ENCODE measurements at regions of chr11 and their contacts with region 1.

Region 1: DNA sequence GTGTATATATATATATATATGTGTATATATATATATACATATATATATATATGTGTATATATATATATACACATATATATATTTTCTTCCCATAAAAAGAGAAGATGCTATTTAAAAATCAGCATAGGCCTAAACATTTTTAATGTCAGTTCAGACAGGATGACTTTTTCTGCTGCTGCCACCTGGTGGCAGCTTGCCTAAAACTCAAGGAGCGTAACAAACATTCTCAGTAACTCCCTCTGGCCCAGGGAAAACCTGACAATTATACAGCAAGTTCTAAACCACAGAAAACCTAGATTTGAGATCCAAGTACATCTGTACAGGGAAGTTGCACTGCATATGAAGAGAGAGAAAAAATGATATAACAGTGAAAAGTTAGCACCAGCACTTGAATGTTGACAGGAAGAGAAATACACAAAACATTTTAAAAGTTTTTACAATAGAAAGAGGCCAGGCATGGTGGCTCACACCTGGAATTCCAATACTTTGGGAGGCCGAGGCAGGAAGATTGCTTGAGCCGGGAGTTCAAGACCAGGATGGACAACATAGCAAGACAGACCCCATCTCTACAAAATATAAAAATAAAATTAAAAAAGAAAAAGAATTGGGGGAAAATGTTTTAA is 16.6 kb downstream of the OR8A1 start:
- DNase-seq: peak; percentile 30
- CTCF ChIP-seq: peak; percentile 80

Region 2: GRCh38 chr11:124070915-124071635 is 515.3 kb before region 1 on chr11:
- in situ Hi-C with region 1: loop called (anchors 25 kb)
- DNase-seq: peak; percentile 64
- CTCF ChIP-seq: peak; percentile 71

Region 3: DNA sequence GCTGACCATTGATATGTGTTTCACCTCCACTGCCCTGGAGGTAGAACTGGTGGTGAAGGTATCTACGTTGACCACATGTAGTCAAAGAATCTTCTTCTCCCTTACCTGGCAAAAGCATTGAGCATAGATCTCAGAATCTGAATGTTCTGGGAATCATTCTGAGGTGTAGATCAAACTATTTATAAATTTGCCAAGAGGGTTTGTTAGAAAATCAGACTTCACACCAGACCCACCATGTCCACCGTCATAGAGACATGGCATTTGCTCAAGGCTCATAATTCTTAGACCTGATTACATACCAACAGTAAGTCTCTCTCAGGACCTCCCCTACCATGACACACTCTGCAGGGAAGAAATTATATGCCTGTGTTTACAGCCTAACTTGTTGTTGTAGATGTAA is 201.9 kb before region 1 on chr11 and contains the start of gene OR8B2:
- in situ Hi-C with region 1: no loop called
- DNase-seq: no peak
- CTCF ChIP-seq: no peak

Region 4: DNA sequence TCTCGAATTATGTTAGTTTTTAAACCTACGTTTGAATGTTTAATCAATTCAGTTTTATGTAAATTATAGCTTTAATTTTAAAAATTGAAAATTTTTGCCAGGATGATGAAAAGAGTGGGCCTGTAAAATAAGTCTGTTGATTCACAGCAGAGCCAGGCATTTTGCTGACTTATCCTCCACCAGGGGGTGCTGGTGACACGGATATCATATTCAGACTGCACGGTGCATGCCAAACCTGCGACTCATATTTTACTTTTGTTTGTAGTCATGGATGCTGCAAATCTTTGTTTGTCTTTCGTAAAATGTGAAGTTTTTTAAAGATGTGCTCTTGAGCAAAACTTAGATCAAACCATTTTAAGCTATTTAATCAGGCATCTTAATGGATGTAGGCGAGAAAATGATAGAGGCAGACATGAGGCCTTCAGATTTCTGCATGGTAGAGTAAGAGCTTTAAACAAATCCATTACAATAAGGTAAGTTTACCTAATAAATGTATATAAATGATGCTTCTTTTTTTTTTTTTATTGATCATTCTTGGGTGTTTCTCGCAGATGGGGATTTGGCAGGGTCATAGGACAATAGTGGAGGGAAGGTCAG is 183.9 kb before region 1 on chr11:
- in situ Hi-C with region 1: loop called (anchors 10 kb)
- DNase-seq: peak; percentile 73
- CTCF ChIP-seq: peak; percentile 79

Region 5: GRCh38 chr11:124536520-124536919 is 49.8 kb before region 1 on chr11:
- in situ Hi-C with region 1: no loop called
- DNase-seq: no peak
- CTCF ChIP-seq: no peak